ENCODE measurements at regions of chr16 and their contacts with region 1.

Region 1: DNA sequence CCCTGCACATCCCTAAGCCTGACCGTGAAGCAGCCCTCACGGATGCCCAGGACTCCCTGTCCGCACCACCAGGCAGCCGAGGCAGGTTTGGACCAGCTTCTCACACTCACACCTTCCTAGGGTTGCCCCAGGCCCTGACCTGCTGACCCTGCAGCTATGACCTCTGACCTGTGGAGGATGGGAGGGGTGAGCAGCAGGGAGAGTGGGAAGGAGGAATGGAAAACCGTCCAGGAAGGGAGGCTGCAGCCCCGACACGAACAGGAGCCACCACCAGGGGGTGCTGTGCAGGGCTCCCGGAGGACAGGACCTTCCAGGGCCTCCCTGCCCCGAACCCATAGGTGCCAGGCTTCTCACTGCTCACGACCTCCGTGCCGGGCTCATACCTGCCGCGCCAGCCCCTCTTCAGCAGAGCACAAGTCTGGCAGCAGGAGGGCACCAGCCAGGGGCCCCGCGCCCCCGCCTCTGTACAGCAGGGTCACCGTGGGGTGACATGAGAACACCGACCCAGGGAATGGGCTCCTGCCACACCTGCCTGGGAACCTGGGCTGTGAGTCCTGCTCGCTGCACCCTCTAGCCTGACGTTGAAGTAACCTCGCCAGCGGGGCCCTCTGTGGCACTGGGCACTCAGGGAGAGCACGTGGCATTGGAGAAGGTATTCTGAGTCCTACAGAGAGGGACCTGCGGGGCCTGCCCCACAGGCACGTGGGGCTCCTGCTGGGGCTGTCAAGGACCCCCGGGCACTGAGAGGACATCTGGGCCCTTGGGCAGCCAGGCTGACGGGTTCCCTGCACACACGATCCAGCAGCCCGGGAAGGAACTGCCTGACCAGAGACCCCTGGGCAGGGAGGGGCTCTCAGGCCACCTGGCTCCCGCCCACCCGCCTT is 37.6 kb downstream of the CTU2 start:
- DNase-seq: peak; percentile 82 to 90
- H3K4me3 ChIP-seq: no peak overlapping the region
- H3K4me3 Mint-ChIP-seq: no peak overlapping the region
- H3K27ac Mint-ChIP-seq: peak overlapping the region; percentile 25
- H3K4me1 ChIP-seq: peaks cover 4% of the 10 kb centered on the region; the same call in 1 of the 2 replicates
- H3K4me1 Mint-ChIP-seq: no peaks in the 10 kb centered on the region
- H3K27me3 ChIP-seq: no peaks in the 10 kb centered on the region
- H3K27me3 Mint-ChIP-seq: no peaks in the 10 kb centered on the region
- CTCF ChIP-seq: peak; percentile 95 to 98

Region 2: GRCh38 chr16:88763502-88764053 is 19.6 kb after region 1 on chr16:
- CTCF ChIA-PET with region 1: interaction called, 7 read pairs
- POLR2A ChIA-PET with region 1: no interaction called
- intact Hi-C with region 1: loop called (anchors 2 kb)
- DNase-seq: peak; percentile 95 to 96
- H3K4me3 ChIP-seq: no peak overlapping the region
- H3K4me3 Mint-ChIP-seq: peak overlapping the region; percentile 68
- H3K27ac Mint-ChIP-seq: peak overlapping the region; percentile 90
- H3K4me1 ChIP-seq: peaks cover 65% of the 10 kb centered on the region
- H3K4me1 Mint-ChIP-seq: peaks cover 19% of the 10 kb centered on the region
- H3K27me3 ChIP-seq: no peaks in the 10 kb centered on the region
- H3K27me3 Mint-ChIP-seq: no peaks in the 10 kb centered on the region
- CTCF ChIP-seq: peak; percentile 4 to 41

Region 3: DNA sequence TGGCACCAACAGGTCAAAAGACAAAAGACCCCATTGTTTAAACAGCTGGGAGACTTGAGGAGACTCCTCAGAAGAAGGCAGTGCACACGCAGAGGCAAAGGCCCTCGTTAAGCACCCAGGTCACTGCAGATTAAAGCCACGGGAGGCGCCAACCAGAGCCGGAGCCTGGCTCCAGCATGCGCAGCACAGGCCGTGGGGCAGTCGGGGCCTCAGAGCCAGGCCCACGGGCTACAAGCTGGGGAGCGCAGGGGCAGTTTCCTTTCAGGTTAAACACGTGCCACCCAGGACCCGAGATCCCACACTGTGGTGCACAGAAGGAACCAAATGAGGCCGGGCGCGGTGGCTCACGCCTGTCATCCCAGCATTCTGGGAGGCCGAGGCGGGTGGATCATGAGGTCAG is 31.9 kb after region 1 on chr16:
- CTCF ChIA-PET with region 1: no interaction called
- POLR2A ChIA-PET with region 1: no interaction called
- intact Hi-C with region 1: no loop called
- DNase-seq: no peak
- H3K4me3 ChIP-seq: no peak overlapping the region
- H3K4me3 Mint-ChIP-seq: no peak overlapping the region
- H3K27ac Mint-ChIP-seq: peak overlapping the region; percentile 19
- H3K4me1 ChIP-seq: peaks cover 53% of the 10 kb centered on the region
- H3K4me1 Mint-ChIP-seq: peaks cover 32% of the 10 kb centered on the region
- H3K27me3 ChIP-seq: no peaks in the 10 kb centered on the region
- H3K27me3 Mint-ChIP-seq: no peaks in the 10 kb centered on the region
- CTCF ChIP-seq: no peak

Measured in Caco-2 (cell line).